Colonic mucosa (tissue), 4 donors: ENCODE measurements at regions of chr17 and their contacts with region 1.

Region 1: DNA sequence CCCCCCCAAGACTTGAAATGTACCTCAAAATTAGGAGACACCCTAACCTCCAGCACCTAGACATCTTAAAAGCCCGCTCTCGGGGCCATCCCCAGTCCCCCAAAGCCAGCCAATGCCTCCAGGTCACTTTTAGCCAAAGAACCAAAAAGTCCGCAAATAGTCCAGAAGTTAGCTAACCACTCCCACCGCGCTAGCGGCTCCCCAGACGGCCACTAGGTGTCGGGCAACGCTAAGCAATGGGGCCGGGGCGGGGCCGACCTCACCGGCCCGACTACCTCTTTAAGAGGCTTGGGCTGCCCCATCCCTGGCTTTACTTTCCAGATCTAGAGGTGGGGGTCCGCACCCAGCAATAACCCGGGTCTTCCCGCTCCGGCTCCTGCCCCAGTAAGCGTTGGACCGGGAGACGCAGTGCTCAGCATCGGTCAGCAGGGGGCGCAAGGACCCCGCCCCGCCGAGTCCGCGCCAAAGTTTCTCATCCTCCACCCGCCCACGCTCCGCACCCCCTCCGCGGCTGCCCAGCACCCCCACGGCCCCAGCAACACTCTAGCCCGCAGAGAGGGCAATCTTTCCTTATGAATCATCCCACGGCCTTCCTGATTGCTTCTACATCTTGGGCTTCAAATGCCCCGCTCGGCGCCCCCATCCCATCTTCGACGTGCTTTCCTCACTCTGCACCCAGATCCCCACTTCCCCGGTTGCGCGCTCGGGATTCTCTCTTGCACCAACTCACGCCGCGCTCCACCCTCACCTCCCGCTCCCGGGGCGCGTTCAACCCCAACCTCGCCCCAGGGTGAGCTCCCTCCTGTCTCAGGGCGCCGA is 765 bp downstream of the COL1A1 start:
- DNase-seq: peak; percentile 92
- H3K4me3 ChIP-seq: peak overlapping the region; percentile 36
- H3K27ac ChIP-seq: peak overlapping the region; percentile 87
- H3K4me1 ChIP-seq: peaks cover 3% of the 10 kb centered on the region
- H3K27me3 ChIP-seq: peaks cover 17% of the 10 kb centered on the region
- CTCF ChIP-seq: peak; percentile 100

Region 2: DNA sequence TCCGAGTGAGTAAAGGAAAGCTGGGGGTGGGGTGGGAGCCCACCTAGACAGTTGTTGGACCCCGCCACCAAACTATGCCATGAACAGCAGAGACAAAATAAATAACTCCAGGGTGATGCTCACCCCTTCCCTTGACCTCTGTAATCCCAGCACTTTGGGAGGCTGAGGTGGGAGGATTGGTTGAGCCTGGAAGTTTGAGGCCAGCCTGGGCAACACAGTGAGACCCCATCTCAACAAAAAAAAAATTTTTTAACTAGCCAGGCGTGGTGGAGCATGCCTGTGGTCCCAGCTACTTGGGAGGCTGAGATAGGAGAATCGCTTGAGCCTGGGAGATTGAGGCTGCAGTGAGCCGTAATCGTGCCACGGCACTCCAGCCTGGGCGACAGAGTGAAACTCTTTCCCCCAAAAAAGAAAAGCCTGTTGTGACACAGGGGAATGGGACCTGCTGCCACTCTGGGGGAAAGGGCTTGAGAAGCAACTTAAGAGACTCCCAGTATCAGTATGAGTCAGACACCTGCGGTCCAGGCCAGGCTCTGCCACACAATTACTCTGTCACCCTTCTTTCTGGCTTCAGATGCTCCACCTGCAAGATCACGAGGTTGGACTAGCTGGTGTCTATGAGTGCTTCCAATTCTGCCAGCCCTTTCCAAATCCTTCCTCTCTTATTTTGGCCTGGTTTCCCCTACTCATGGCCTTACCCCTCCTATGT is 29.9 kb before region 1 on chr17:
- intact Hi-C with region 1: loop called (anchors 2 kb)
- DNase-seq: no peak
- H3K4me3 ChIP-seq: no peak overlapping the region
- H3K27ac ChIP-seq: no peak overlapping the region
- H3K4me1 ChIP-seq: no peaks in the 10 kb centered on the region
- H3K27me3 ChIP-seq: no peaks in the 10 kb centered on the region
- CTCF ChIP-seq: no peak

Region 3: DNA sequence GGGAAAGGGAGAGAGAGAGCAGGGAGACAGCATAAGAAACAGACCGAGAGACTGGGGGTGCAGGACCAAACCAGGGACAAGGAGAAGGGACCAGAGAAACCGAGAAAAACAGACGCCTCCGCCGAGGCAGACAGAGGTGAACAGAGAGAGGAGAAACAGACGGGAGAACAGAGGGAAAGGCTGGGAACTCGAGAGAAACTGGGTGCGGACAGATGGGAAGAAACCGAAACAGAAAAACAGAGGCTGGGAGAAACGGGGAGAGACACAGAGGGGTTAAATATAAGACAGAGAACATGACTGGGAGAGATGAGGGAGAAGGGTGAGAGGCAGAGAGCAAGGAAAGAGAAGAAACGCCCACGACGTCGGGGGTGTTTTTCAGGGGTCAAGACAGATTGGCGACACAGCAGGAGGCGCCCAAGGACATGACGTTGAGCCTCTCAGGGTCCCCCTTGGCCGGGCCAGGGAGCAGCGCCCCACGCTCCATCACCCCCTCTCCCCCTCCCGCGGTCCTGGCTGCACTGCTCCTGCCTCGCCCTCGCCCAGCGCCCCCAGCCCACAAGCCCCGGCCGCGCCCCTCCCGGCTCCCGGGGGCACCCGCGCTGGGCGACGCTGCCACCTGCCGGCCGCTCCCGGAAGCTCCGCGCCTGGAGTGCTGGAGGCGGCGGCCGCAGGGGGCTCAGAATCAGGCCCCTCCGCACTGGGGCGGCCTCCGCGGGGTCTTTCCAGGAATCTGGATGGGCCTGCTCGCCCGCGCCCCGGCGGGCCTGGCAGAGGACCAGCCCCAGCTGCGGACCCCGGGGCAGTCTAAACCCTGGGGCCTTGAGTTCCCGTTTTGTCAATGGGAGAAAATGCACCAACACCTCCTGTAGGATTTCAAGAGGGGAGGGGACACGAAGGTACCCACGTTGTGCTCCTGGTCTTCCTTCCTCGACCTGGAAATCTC is 72.3 kb after region 1 on chr17:
- intact Hi-C with region 1: loop called (anchors 2 kb)
- DNase-seq: peak; percentile 74
- H3K4me3 ChIP-seq: peak overlapping the region; percentile 54
- H3K27ac ChIP-seq: peak overlapping the region; percentile 47
- H3K4me1 ChIP-seq: peaks cover 4% of the 10 kb centered on the region
- H3K27me3 ChIP-seq: no peaks in the 10 kb centered on the region
- CTCF ChIP-seq: peak; percentile 94

Region 4: DNA sequence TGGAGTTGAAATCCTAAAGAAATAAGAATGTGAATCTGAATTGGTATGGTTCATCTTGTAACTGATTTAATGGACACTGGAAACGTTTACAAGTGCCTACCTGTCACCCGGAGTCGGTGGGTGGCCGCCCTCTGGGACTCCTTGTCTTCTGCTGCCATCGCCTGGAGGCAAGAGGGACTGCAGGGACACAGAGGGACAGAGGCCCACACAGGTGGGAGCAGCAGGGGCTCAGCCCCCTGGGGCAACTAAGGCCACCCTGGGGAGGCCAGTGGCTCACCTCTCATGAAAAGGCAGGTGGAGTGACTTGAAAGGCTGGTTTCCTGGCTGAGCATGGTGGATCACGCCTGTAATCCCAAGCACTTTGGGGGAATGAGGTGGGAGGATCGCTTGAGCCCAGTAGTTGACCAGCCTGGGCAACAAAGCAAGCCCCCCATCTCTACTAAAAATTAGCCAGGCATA is 96.8 kb after region 1 on chr17:
- intact Hi-C with region 1: loop called (anchors 1 kb)
- DNase-seq: peak; percentile 83
- H3K4me3 ChIP-seq: no peak overlapping the region
- H3K27ac ChIP-seq: no peak overlapping the region
- H3K4me1 ChIP-seq: no peaks in the 10 kb centered on the region
- H3K27me3 ChIP-seq: no peaks in the 10 kb centered on the region
- CTCF ChIP-seq: peak; percentile 97